ENCODE measurements at regions of chr12 and their contacts with region 1.

Region 1: GRCh38 chr12:94149119-94149780 is 873 bp downstream of the PLXNC1 start:
- DNase-seq: peak in 3 of 4 donors; percentile 35 to 92 (median 66)
- ATAC-seq: peak; percentile 45
- H3K4me3 ChIP-seq: peak overlapping the region; percentile 50 to 75
- H3K27ac ChIP-seq: peak overlapping the region; percentile 39 to 88
- H3K4me1 ChIP-seq: peaks cover 8 to 50% of the 10 kb centered on the region in 2 donors
- H3K27me3 ChIP-seq: peaks cover 0 to 32% of the 10 kb centered on the region in 2 donors
- CTCF ChIP-seq: peak; percentile 15 to 37

Region 2: GRCh38 chr12:93918262-93918661 is 231.0 kb before region 1 on chr12:
- intact Hi-C with region 1: no loop called
- DNase-seq: no peak
- ATAC-seq: peak; percentile 49
- H3K4me3 ChIP-seq: no peak overlapping the region
- H3K27ac ChIP-seq: no peak overlapping the region
- H3K4me1 ChIP-seq: no peaks in the 10 kb centered on the region
- H3K27me3 ChIP-seq: no peaks in the 10 kb centered on the region
- CTCF ChIP-seq: no peak

Region 3: GRCh38 chr12:94435511-94435927 is 286.3 kb after region 1 on chr12:
- intact Hi-C with region 1: loop called in 1 of 2 experiments (anchors 10 kb)
- DNase-seq: no peak
- ATAC-seq: no peak
- H3K4me3 ChIP-seq: no peak overlapping the region
- H3K27ac ChIP-seq: no peak overlapping the region
- H3K4me1 ChIP-seq: peaks cover 0 to 20% of the 10 kb centered on the region in 2 donors
- H3K27me3 ChIP-seq: no peaks in the 10 kb centered on the region
- CTCF ChIP-seq: no peak

Region 4: GRCh38 chr12:94516985-94517384 is 367.7 kb after region 1 on chr12:
- intact Hi-C with region 1: loop called in 1 of 2 experiments (anchors 10 kb)
- DNase-seq: no peak
- ATAC-seq: no peak
- H3K4me3 ChIP-seq: no peak overlapping the region
- H3K27ac ChIP-seq: no peak overlapping the region
- H3K4me1 ChIP-seq: no peaks in the 10 kb centered on the region
- H3K27me3 ChIP-seq: no peaks in the 10 kb centered on the region
- CTCF ChIP-seq: no peak

Region 5: DNA sequence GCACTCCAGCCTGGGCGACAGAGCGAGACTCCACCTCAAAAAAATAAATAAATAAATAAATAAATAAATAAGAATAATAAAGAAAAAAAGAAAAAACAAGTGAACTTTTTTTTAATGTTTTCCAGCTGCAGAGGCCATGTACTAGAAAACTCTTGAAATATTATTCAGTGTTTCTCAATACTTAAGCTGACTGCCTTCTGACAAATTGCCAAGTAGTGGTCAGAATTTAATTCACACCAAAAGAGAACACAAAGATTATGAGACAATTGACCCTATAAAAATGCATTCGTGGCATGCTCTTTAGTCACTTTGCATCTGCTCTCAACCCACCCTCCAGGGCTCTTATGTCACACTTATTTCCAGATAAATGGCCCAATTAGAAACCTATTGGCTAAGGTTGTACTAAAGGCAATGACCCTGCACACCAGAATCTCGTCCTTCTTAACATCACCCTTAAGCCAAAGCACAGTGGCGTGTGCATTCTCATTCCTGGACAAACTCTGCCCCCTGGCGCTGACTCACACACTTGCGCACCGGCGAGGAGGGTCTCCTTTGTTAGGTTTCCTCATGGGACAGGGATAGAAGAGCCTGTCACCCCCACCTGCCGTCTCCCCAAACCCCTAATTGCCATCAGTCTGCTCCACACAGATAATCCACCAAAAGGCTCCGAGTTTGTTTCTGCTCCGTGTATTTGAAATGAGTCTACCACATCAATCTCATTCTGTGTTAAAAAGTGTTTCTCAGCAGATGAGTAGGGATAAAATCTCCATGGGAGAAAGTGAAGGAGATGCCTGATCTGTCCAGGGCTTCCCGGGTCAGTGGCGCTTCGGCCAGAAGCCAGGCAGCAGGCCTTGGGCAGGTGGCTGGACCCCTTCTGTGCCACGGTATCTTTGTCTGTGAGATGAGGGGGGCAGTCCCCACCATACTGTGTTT is 383.5 kb after region 1 on chr12:
- intact Hi-C with region 1: loop called in 1 of 2 experiments (anchors 5 kb)
- DNase-seq: peak; percentile 68 to 85 (median 76)
- ATAC-seq: peak; percentile 94
- H3K4me3 ChIP-seq: no peak overlapping the region
- H3K27ac ChIP-seq: no peak overlapping the region
- H3K4me1 ChIP-seq: no peaks in the 10 kb centered on the region
- H3K27me3 ChIP-seq: no peaks in the 10 kb centered on the region
- CTCF ChIP-seq: peak; percentile 72 to 73